ENCODE measurements at regions of chr2 and their contacts with region 1.

Region 1: GRCh38 chr2:108637304-108637669 is 82.0 kb upstream of the RANBP2 start:
- DNase-seq: peak in 1 of 2 experiments; percentile 32
- ATAC-seq: 0 out of 6 replicates have a peak, but pooled peaks of 1 of the 2 experiments have one; percentile 7
- H3K4me3 ChIP-seq: no peak overlapping the region
- H3K27ac ChIP-seq: peak overlapping the region; percentile 10 to 64; a peak in 4 of 6 replicates
- H3K4me1 ChIP-seq: peaks cover 75% of the 10 kb centered on the region
- CTCF ChIP-seq: no peak
- EP300 ChIP-seq: no peak
- POLR2A ChIP-seq: no peak
- RAD21 ChIP-seq: no peak

Region 2: GRCh38 chr2:108533832-108534583 is 103.3 kb before region 1 on chr2 and contains the start of gene LIMS1:
- CTCF ChIA-PET with region 1: interaction called, 10 read pairs
- POLR2A ChIA-PET with region 1: interaction called, 4 read pairs
- DNase-seq: peak; percentile 85 to 94
- ATAC-seq: peak; percentile 95 to 98
- H3K4me3 ChIP-seq: peak within 1 kb of the TSS; percentile 70
- H3K27ac ChIP-seq: peak within 1 kb of the TSS; percentile 97 to 99
- H3K4me1 ChIP-seq: peaks cover 47% of the 10 kb centered on the region
- CTCF ChIP-seq: no peak
- EP300 ChIP-seq: peak in 1 of 2 experiments; percentile 12; a peak in 1 of 5 replicates
- POLR2A ChIP-seq: peak; percentile 87
- RAD21 ChIP-seq: no peak
- polyA plus RNA-seq, gene LIMS1: 92.0 and 94.1 TPM in 2 replicates

Region 3: DNA sequence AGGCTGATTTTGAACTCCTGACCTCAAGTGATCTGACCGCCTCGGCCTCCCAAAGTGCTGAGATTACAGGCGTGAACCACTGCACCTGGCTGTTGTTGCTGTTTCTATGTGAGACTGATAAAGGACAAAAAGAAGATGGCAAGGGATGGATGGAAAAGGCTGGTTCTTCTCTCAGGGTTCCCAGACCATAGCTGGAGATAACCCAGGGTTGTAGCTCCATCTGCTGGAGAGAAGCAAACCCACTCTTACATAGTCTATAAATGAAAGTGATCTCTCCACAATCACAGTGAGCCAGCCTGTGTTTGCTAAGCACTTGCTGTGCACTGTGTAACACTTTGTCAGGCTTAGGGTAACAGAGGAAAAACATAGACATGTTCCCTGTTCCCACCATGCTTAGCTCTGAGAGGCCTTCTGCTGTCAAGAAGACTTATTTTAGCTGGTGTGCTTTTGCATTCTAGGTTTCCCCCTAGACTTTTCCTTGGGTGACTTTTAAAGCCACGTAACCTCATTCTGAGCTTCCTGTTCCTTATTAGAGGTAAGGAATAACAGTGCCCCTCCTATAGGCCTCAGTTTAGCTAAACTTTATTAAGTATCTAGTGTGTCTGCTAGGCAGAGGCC is 53.3 kb before region 1 on chr2:
- CTCF ChIA-PET with region 1: interaction called, 30 read pairs
- POLR2A ChIA-PET with region 1: no interaction called
- DNase-seq: peak; percentile 72 to 81
- ATAC-seq: peak; percentile 83 to 88
- H3K4me3 ChIP-seq: no peak overlapping the region
- H3K27ac ChIP-seq: peak overlapping the region; percentile 59 to 64
- H3K4me1 ChIP-seq: peaks cover 74% of the 10 kb centered on the region
- CTCF ChIP-seq: peak; percentile 90
- EP300 ChIP-seq: no peak
- POLR2A ChIP-seq: no peak
- RAD21 ChIP-seq: peak; percentile 94 to 96

Region 4: GRCh38 chr2:108607706-108608301 is 29.5 kb before region 1 on chr2:
- CTCF ChIA-PET with region 1: interaction called, 68 read pairs
- POLR2A ChIA-PET with region 1: interaction called, 3 read pairs
- DNase-seq: peak in 1 of 2 experiments; percentile 47
- ATAC-seq: peak; percentile 83 to 85
- H3K4me3 ChIP-seq: no peak overlapping the region
- H3K27ac ChIP-seq: no peak overlapping the region
- H3K4me1 ChIP-seq: no peaks in the 10 kb centered on the region; the same call in 2 of the 3 replicates
- CTCF ChIP-seq: peak; percentile 55
- EP300 ChIP-seq: no peak
- POLR2A ChIP-seq: no peak
- RAD21 ChIP-seq: peak; percentile 56 to 58

Measured in A549 (cell line).